ENCODE measurements at regions of chr2 and their contacts with region 1.

Region 1: DNA sequence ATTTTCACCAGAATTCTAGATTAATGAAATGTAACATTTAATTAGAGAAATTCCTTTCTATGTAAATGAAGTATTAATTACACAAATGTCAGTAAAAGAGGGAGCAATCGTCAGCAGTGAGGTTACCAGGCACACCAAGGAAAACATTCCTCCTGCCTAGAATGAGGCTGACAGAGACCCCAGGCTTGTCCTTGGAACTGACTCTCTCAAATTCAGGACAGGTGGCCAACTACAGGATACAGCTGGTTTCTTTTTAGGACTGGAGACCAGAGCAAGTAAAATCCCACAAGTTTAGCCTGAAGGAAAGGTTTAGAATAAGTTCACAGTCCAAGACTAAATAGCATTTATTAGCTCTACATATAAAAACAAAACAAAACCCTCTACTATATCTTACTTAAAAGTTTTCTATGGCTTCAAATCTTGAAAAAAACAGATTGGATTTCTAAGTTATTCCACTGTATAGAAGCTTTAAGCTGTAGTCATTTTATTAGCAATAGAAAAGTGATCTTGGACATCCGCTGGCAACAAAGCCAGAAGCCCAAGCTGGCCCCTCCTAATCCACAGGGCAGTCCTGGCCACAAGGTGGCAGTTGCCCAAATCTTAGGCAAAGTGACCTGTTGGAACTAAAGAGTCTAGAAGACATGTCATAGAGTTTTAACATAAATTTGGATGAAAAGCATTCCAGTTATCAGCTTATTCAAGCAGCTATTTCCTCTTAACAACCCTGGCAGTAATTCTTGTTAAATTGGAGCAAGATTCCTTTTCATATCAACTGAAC is 81.0 kb downstream of the SP3 start:
- DNase-seq: peak; percentile 75
- ATAC-seq: peak; percentile 79

Region 2: DNA sequence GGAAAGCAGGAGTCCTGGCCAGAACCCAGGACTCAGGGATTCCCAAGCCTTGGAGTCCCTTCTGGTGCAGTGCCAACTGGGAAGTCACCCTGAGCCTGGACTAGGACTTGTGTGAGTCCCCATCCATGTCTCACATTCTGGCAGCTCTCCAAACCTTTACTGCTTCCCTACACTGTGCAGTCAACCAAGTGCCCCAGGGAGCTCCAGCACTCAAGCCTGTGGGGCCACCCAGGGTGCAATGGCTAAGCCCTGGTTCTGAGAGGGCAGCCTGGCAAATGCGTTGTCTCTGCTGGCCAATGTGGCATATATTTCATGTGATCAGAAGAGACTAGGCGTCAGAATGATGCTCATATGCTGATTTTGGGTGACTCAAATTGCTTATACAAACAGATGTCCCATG is 142.5 kb before region 1 on chr2:
- intact Hi-C with region 1: no loop called
- DNase-seq: no peak
- ATAC-seq: no peak

Region 3: DNA sequence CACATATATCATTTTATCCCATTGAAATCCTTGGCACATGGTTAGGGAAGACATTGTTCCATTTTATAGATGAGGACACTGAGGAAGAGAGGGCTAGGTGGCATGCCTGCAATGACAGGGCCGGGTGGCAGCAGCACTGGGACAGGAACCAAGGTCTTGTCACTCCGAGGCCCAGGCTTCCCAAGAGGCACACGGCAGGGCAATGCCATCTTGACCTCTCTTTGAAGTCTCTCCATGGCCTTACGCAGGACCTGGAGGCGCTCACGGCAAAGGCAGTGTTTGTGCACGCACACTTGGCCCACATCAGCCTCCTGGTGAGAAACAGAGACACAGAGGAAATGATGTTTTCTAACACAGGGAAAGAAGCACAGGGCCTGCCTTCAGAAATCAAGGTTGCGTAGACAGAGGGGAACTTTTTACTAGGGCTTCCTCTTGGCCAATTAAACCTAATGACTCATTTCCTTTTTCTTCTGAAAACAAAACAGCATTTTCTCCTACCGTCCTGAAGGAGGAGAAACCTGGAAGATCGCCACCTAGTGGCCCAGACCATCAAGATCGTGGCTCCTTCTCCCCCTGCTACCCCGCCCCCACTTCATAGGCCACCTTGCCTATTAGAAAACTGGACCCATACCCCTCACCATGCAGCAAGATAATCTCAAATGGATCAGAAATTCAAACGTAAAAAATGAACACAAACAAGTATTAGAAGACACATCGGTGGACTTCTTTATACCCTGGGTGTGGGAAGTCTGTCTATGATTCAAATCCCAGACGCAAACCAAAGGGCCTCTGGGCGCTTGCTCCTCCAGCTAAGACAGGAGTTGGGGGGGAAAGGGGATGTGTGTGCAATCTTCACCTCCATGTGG is 155.6 kb after region 1 on chr2:
- intact Hi-C with region 1: loop called (anchors 10 kb)
- DNase-seq: peak; percentile 90
- ATAC-seq: peak; percentile 91

Measured in Right ventricle myocardium superior (tissue), 1 donor.